ENCODE measurements at regions of chr6 and their contacts with region 1.

Region 1: GRCh38 chr6:156686995-156687788 is 90.0 kb upstream of the ARID1B start:
- DNase-seq: peak; percentile 97
- H3K4me3 ChIP-seq: peak overlapping the region; percentile 60 to 76 (median 71)
- H3K27ac ChIP-seq: peak overlapping the region; percentile 94 to 99 (median 96)
- H3K4me1 ChIP-seq: peaks cover 0 to 16% (median 10%) of the 10 kb centered on the region in 4 donors
- H3K27me3 ChIP-seq: no peaks in the 10 kb centered on the region
- CTCF ChIP-seq: no peak
- EP300 ChIP-seq: peak in 1 of 4 donors; percentile 28
- POLR2A ChIP-seq: peak; percentile 84 to 89

Region 2: DNA sequence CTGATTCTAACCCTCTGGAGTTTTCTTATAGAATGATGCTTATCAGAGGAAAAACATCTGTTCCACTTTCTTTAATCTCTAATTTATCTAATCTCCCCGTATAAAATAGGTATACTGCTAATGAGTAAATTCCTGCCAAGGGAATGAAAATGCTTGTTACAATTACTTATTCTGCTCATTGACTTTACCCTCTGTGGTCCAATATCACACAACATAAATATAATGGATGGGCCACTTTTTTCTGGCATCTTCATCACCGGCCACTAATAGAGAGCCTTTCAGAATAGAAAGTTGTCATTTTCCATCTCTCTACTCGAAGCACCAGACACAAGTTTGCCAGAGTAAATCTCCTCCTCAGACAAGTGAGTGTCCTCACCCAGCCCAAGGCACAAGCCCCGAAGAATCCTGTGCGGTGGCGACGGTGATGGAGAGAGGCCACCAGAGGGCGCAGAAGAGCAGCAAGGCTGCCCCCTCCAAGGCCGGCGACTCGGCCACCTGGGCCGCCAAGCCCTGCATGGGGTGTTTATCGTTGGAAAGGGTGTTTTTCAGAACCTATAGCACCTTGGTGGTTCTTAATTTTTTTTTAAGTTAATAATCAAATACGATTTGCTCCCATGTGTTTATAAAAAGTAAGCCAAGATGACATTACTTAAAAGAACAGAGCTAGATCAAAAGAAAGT is 122.9 kb before region 1 on chr6:
- intact Hi-C with region 1: loop called (anchors 5 kb)
- DNase-seq: peak; percentile 90
- H3K4me3 ChIP-seq: no peak overlapping the region
- H3K27ac ChIP-seq: peak overlapping the region in 2 of 4 donors; percentile 18 to 27
- H3K4me1 ChIP-seq: peaks cover 0 to 15% (median 6%) of the 10 kb centered on the region in 4 donors
- H3K27me3 ChIP-seq: no peaks in the 10 kb centered on the region
- CTCF ChIP-seq: peak; percentile 80 to 93 (median 90)
- EP300 ChIP-seq: no peak
- POLR2A ChIP-seq: no peak

Region 3: GRCh38 chr6:156634951-156635371 is 52.2 kb before region 1 on chr6:
- intact Hi-C with region 1: no loop called
- DNase-seq: no peak
- H3K4me3 ChIP-seq: peak overlapping the region in 3 of 4 donors; percentile 10 to 15 (median 14)
- H3K27ac ChIP-seq: no peak overlapping the region
- H3K4me1 ChIP-seq: peaks cover 0 to 3% (median 0%) of the 10 kb centered on the region in 4 donors
- H3K27me3 ChIP-seq: no peaks in the 10 kb centered on the region
- CTCF ChIP-seq: no peak
- EP300 ChIP-seq: no peak
- POLR2A ChIP-seq: no peak

Region 4: DNA sequence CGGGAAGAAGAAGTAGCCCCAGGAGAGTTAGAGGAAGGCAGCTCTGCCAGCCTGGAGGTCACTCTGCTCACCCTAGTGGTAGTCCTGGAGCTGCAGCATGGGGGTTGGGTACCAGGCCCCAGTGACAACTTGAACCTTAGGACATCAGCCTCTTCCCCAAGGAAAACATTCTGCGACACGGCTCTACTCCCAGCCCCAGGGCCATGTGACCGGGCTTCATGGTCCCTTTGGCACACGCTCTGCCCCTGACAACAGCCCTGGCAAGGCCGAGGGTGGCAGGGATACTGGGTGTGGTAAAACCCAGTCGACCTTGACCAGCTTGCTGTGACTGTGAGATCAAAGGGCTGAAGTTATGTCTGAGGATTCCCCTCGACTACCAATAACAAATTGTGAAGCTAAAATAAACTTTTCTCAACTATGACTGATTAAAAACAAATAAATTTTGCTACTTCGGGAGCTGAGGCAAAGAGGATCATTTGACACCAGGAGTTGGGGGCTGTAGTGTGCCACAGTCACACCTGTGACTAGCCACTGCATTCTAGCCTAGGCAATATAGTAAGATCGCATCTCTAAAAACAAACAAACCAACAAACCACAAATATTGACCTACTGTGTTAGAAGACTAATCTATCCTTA is 65.6 kb after region 1 on chr6:
- intact Hi-C with region 1: no loop called
- DNase-seq: no peak
- H3K4me3 ChIP-seq: no peak overlapping the region
- H3K27ac ChIP-seq: no peak overlapping the region
- H3K4me1 ChIP-seq: no peaks in the 10 kb centered on the region
- H3K27me3 ChIP-seq: no peaks in the 10 kb centered on the region
- CTCF ChIP-seq: no peak
- EP300 ChIP-seq: no peak
- POLR2A ChIP-seq: no peak

Region 5: GRCh38 chr6:156866220-156867015 is 179.2 kb after region 1 on chr6:
- intact Hi-C with region 1: loop called (anchors 10 kb)
- DNase-seq: peak; percentile 58
- H3K4me3 ChIP-seq: no peak overlapping the region
- H3K27ac ChIP-seq: peak overlapping the region in 2 of 4 donors; percentile 31 to 38
- H3K4me1 ChIP-seq: peaks cover 0 to 43% (median 37%) of the 10 kb centered on the region in 4 donors
- H3K27me3 ChIP-seq: no peaks in the 10 kb centered on the region
- CTCF ChIP-seq: no peak
- EP300 ChIP-seq: no peak
- POLR2A ChIP-seq: no peak

Region 6: GRCh38 chr6:157021344-157021992 is 334.3 kb after region 1 on chr6:
- intact Hi-C with region 1: loop called (anchors 1 kb)
- DNase-seq: peak; percentile 97
- H3K4me3 ChIP-seq: peak overlapping the region; percentile 68 to 89 (median 76)
- H3K27ac ChIP-seq: peak overlapping the region; percentile 97 to 100 (median 100)
- H3K4me1 ChIP-seq: peaks cover 0 to 55% (median 41%) of the 10 kb centered on the region in 4 donors
- H3K27me3 ChIP-seq: no peaks in the 10 kb centered on the region
- CTCF ChIP-seq: peak in 2 of 4 experiments; percentile 38 to 48
- EP300 ChIP-seq: no peak
- POLR2A ChIP-seq: peak; percentile 82 to 92

Measured in sigmoid colon (tissue), 7 donors.